ENCODE measurements at regions of chr7 and their contacts with region 1.

Region 1: DNA sequence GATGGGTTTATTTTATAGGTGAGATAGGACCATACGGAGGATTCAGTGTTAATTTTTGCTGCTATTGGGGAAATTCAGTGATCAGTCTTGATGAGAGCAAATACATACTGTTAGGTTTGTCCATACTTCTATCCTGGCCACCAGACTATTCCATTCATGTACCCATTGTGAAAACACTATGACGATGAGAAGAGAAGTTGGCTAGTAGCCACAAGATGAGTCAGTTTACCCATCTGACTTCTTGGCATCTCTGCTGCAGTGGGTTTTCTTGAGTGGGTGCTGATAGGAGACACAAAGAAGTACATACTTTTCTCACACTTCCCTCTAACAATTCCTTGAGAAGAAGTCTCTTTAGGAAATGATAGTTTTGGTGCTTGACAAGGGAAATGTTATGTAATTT is 133.1 kb downstream of the TFPI2 start:
- DNase-seq: no peak
- ATAC-seq: no peak
- H3K4me3 ChIP-seq: no peak overlapping the region
- H3K27ac ChIP-seq: no peak overlapping the region
- H3K4me1 ChIP-seq: no peaks in the 10 kb centered on the region
- H3K27me3 ChIP-seq: no peaks in the 10 kb centered on the region
- CTCF ChIP-seq: no peak

Region 2: GRCh38 chr7:94050046-94050445 is 292.6 kb after region 1 on chr7:
- intact Hi-C with region 1: loop called in 1 of 2 experiments (anchors 5 kb)
- DNase-seq: no peak
- ATAC-seq: no peak
- H3K4me3 ChIP-seq: no peak overlapping the region
- H3K27ac ChIP-seq: no peak overlapping the region
- H3K4me1 ChIP-seq: no peaks in the 10 kb centered on the region
- H3K27me3 ChIP-seq: no peaks in the 10 kb centered on the region
- CTCF ChIP-seq: no peak

Measured in psoas muscle (tissue), 8 donors.